ENCODE measurements at regions of chr17 and their contacts with region 1.

Region 1: GRCh38 chr17:64393000-64393402 is 2.3 kb upstream of the PECAM1 start:
- DNase-seq: no peak
- H3K4me3 ChIP-seq: no peak overlapping the region
- H3K27ac ChIP-seq: no peak overlapping the region
- H3K4me1 ChIP-seq: peaks cover 0 to 10% (median 7%) of the 10 kb centered on the region in 4 donors
- H3K27me3 ChIP-seq: no peaks in the 10 kb centered on the region
- CTCF ChIP-seq: no peak
- EP300 ChIP-seq: no peak
- POLR2A ChIP-seq: no peak

Region 2: DNA sequence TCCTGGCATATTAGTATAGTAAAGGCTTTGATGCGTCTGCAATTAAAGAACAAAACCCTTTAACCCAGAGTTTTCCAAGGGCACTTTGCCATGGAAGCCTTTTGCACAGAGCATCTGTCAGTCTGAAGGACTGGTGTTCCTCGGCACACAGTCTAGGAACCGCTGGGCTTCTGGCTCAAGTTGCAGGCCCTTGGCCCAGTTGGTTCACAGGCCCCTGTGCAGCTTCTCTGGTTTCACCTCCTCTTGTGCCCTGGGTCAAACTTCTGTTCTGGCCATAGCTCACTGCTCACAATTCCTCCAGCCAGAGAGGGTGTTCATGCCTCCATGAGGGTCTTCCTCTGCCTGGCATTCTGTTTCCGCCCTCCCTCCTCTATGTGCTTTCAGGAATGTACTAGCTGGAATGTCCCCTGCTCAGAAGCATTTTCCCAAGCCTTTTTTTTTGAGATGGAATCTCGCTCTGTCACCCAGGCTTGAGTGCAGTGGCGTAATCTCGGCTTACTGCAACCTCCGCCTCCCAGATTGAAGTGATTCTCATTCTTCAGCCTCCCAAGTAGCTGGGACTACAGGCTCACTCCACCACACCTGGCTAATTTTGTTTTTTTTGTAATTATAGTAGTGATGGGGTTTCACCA is 95.4 kb before region 1 on chr17:
- in situ Hi-C with region 1: no loop called
- intact Hi-C with region 1: no loop called
- DNase-seq: no peak
- H3K4me3 ChIP-seq: no peak overlapping the region
- H3K27ac ChIP-seq: no peak overlapping the region
- H3K4me1 ChIP-seq: no peaks in the 10 kb centered on the region
- H3K27me3 ChIP-seq: no peaks in the 10 kb centered on the region
- CTCF ChIP-seq: no peak
- EP300 ChIP-seq: no peak
- POLR2A ChIP-seq: no peak

Region 3: GRCh38 chr17:64331946-64332493 is 61.0 kb before region 1 on chr17:
- in situ Hi-C with region 1: no loop called
- intact Hi-C with region 1: loop called (anchors 2 kb)
- DNase-seq: no peak
- H3K4me3 ChIP-seq: no peak overlapping the region
- H3K27ac ChIP-seq: peak overlapping the region in 3 of 4 donors; percentile 29 to 37 (median 35)
- H3K4me1 ChIP-seq: peaks cover 0 to 4% (median 2%) of the 10 kb centered on the region in 4 donors
- H3K27me3 ChIP-seq: no peaks in the 10 kb centered on the region
- CTCF ChIP-seq: no peak
- EP300 ChIP-seq: no peak
- POLR2A ChIP-seq: no peak

Region 4: GRCh38 chr17:64369007-64369893 is 23.8 kb before region 1 on chr17:
- in situ Hi-C with region 1: no loop called
- intact Hi-C with region 1: no loop called
- DNase-seq: no peak
- H3K4me3 ChIP-seq: no peak overlapping the region
- H3K27ac ChIP-seq: no peak overlapping the region
- H3K4me1 ChIP-seq: no peaks in the 10 kb centered on the region
- H3K27me3 ChIP-seq: no peaks in the 10 kb centered on the region
- CTCF ChIP-seq: no peak
- EP300 ChIP-seq: no peak
- POLR2A ChIP-seq: no peak

Region 5: DNA sequence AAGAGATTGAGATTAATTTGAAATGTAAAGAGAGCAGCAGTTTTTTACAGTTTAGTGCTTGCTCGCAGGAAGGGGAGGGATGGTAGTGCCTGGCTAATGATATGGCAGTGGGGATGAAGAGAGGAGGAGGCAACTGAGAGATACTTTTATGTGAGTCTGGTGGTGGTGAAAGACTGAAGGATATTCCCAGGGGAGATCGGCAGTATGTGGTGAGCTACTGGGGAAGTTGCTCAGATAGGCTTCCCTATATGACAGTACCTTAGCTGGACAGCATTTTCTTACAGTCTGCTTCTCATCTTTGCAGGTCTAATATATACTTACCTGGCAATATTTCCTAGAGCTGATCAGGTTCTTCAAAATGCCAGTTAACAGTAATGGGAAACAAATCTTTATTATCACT is 122.4 kb after region 1 on chr17:
- in situ Hi-C with region 1: no loop called
- intact Hi-C with region 1: no loop called
- DNase-seq: no peak
- H3K4me3 ChIP-seq: no peak overlapping the region
- H3K27ac ChIP-seq: no peak overlapping the region
- H3K4me1 ChIP-seq: no peaks in the 10 kb centered on the region
- H3K27me3 ChIP-seq: no peaks in the 10 kb centered on the region
- CTCF ChIP-seq: no peak
- EP300 ChIP-seq: no peak
- POLR2A ChIP-seq: no peak